ENCODE measurements at regions of chr5 and their contacts with region 1.

Region 1: GRCh38 chr5:154829589-154830218 is 20.7 kb downstream of the FAXDC2 start:
- DNase-seq: no peak
- ATAC-seq: no peak
- H3K4me3 ChIP-seq: no peak overlapping the region
- H3K27ac ChIP-seq: no peak overlapping the region
- H3K4me1 ChIP-seq: no peaks in the 10 kb centered on the region
- H3K27me3 ChIP-seq: no peaks in the 10 kb centered on the region
- CTCF ChIP-seq: no peak

Region 2: DNA sequence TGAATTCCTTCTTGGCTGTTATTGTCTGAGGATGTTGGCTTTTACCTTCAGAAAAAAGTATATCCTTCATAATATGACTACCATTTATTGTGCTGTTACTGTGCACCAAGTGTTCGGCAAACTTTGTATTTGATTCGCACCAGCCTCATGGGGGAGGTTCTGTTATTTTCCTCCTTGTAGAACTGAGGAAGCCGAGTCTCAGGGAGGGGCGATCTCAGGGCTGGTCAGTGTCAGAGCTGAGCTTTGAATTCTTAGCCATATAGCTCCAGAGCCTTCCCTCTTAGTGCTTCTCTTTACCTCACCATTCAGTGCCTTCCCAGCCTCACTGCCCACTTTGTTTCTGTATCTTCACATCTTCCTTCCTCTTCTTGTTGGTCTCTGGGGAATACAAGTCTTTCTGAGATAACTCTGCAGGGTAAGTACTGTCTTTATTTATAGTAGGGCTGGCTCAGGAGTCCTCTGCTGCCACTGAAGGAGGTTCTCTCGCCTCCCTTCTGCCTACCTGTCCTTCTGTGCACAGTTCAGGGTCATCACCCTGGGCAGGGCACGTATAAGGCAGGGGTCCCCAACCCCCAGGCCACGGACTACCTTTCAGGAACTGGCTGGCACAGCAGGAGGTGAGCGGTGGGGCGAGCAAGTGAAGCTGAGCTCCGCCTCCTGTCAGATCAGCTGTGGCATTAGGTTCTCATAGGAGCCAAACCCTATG is 590.8 kb before region 1 on chr5:
- CTCF ChIA-PET with region 1: no interaction called
- POLR2A ChIA-PET with region 1: no interaction called
- in situ Hi-C with region 1: no loop called
- intact Hi-C with region 1: no loop called
- DNase-seq: no peak
- ATAC-seq: no peak
- H3K4me3 ChIP-seq: no peak overlapping the region
- H3K27ac ChIP-seq: no peak overlapping the region
- H3K4me1 ChIP-seq: no peaks in the 10 kb centered on the region
- H3K27me3 ChIP-seq: no peaks in the 10 kb centered on the region
- CTCF ChIP-seq: no peak

Region 3: GRCh38 chr5:154541553-154541952 is 288.2 kb before region 1 on chr5:
- CTCF ChIA-PET with region 1: no interaction called
- POLR2A ChIA-PET with region 1: no interaction called
- in situ Hi-C with region 1: no loop called
- intact Hi-C with region 1: no loop called
- DNase-seq: no peak
- ATAC-seq: no peak
- H3K4me3 ChIP-seq: no peak overlapping the region
- H3K27ac ChIP-seq: no peak overlapping the region
- H3K4me1 ChIP-seq: peaks cover 12% of the 10 kb centered on the region
- H3K27me3 ChIP-seq: peaks cover 2% of the 10 kb centered on the region; the same call in 1 of the 2 replicates
- CTCF ChIP-seq: 0 out of 2 replicates have a peak, but pooled peaks have one; percentile 22

Region 4: GRCh38 chr5:154673506-154673905 is 156.2 kb before region 1 on chr5:
- CTCF ChIA-PET with region 1: no interaction called
- POLR2A ChIA-PET with region 1: interaction called, 12 read pairs
- in situ Hi-C with region 1: no loop called
- intact Hi-C with region 1: no loop called
- DNase-seq: no peak
- ATAC-seq: no peak
- H3K4me3 ChIP-seq: no peak overlapping the region
- H3K27ac ChIP-seq: no peak overlapping the region
- H3K4me1 ChIP-seq: no peaks in the 10 kb centered on the region
- H3K27me3 ChIP-seq: no peaks in the 10 kb centered on the region
- CTCF ChIP-seq: no peak

Region 5: DNA sequence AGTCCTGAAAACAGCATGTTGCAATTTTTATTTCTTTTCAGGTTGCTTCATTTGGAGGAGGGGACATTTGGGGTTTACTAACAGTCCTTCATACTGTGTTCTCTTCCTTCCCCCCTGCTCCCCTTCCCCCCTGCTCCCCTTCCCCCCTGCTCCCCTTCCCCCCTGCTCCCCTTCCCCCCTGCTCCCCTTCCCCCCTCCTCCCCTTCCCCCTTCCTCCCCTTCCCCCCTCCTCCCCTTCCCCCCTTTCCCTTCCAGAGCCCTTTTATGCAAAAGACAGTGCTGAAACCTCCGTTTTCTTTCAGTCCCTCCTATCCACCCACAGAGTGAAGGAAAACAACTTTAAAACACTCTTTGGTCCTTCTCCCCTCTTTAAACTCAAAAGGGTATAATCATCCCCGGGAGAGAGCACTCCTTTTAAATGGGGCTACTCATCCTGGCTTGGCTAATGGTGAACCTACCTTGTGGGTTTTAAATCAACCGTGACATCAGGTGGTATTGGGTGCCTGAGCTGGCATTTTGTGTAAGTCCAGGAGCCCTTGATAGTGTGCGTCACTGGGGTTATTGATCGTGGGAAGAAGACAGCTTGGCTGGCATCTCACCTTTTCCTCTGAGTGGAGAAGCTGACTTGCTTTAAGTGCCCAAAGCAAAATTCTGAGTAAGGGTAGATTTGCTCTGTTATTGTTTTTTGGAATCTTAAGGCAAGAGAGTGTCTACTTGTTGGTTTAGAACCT is 71.9 kb before region 1 on chr5:
- CTCF ChIA-PET with region 1: no interaction called
- POLR2A ChIA-PET with region 1: interaction called, 13 read pairs
- in situ Hi-C with region 1: no loop called
- intact Hi-C with region 1: no loop called
- DNase-seq: no peak
- ATAC-seq: no peak
- H3K4me3 ChIP-seq: peak overlapping the region; percentile 79 to 80
- H3K27ac ChIP-seq: peak overlapping the region; percentile 68
- H3K4me1 ChIP-seq: peaks cover 56% of the 10 kb centered on the region
- H3K27me3 ChIP-seq: no peaks in the 10 kb centered on the region
- CTCF ChIP-seq: no peak